ENCODE measurements at regions of chr9 and their contacts with region 1.

Region 1: GRCh38 chr9:136849038-136849959 is at the start of gene PHPT1:
- DNase-seq: peak; percentile 92
- H3K4me3 ChIP-seq: peak within 1 kb of the TSS; percentile 97
- CTCF ChIP-seq: no peak

Region 2: GRCh38 chr9:136631038-136632000 is 218.0 kb before region 1 on chr9:
- CTCF ChIA-PET with region 1: no interaction called
- POLR2A ChIA-PET with region 1: no interaction called
- DNase-seq: no peak
- H3K4me3 ChIP-seq: no peak overlapping the region
- CTCF ChIP-seq: peak; percentile 93

Region 3: GRCh38 chr9:136820971-136821825 is 28.1 kb before region 1 on chr9:
- CTCF ChIA-PET with region 1: interaction called, 21 read pairs
- POLR2A ChIA-PET with region 1: no interaction called
- DNase-seq: no peak
- H3K4me3 ChIP-seq: no peak overlapping the region
- CTCF ChIP-seq: no peak

Region 4: GRCh38 chr9:136829981-136830885 is 19.1 kb before region 1 on chr9:
- CTCF ChIA-PET with region 1: interaction called, 22 read pairs
- POLR2A ChIA-PET with region 1: no interaction called
- DNase-seq: no peak
- H3K4me3 ChIP-seq: no peak overlapping the region
- CTCF ChIP-seq: no peak

Measured in AG04449 (cell line).